ENCODE measurements at regions of chr14 and their contacts with region 1.

Region 1: DNA sequence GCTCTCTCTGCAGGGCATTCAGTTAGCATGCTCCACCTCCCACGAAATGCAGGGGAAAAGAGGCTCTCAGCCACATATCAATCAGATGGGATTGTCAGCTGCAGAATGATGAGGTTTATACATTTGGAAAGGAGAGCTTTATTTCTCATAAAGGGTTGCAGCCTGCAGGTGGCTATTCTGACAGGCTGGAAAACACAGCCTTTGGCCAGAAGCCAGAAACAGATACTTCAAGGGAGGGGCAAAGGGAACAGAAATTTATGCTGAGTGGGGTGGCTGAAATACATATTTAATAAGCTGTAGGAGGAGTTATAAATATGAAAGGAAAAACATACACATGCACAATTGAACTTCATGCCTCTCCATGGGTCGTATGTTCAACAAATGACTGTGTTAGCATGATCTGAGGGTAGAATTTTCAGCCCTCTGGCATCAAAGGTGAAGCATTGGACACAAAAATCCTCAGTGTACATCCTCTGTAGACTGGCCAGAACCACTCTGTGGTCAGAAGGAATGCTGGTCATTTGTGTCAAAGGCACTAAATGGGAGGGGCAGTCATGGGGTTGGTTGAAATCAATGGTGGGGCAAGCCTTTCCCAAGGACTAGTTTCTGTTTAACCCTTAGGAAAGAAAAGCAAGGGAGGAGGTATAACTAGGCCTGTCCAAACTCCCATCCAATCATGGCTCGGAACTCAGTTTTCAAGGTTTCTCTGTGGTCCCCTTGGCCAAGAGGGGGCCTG is 62.4 kb downstream of the TMX1 start:
- DNase-seq: peak; percentile 34 to 62
- H3K4me3 ChIP-seq: no peak overlapping the region
- H3K27ac ChIP-seq: peak overlapping the region; percentile 78
- H3K4me1 ChIP-seq: peaks cover 38% of the 10 kb centered on the region
- H3K27me3 ChIP-seq: no peaks in the 10 kb centered on the region
- CTCF ChIP-seq: no peak

Region 2: GRCh38 chr14:51490205-51490604 is 187.7 kb after region 1 on chr14:
- CTCF ChIA-PET with region 1: no interaction called
- POLR2A ChIA-PET with region 1: no interaction called
- intact Hi-C with region 1: no loop called
- DNase-seq: no peak
- H3K4me3 ChIP-seq: no peak overlapping the region
- H3K27ac ChIP-seq: no peak overlapping the region
- H3K4me1 ChIP-seq: no peaks in the 10 kb centered on the region
- H3K27me3 ChIP-seq: no peaks in the 10 kb centered on the region
- CTCF ChIP-seq: no peak

Region 3: GRCh38 chr14:51692646-51693045 is 390.2 kb after region 1 on chr14:
- CTCF ChIA-PET with region 1: no interaction called
- POLR2A ChIA-PET with region 1: interaction called, 10 read pairs
- intact Hi-C with region 1: no loop called
- DNase-seq: no peak
- H3K4me3 ChIP-seq: no peak overlapping the region
- H3K27ac ChIP-seq: no peak overlapping the region
- H3K4me1 ChIP-seq: no peaks in the 10 kb centered on the region
- H3K27me3 ChIP-seq: no peaks in the 10 kb centered on the region
- CTCF ChIP-seq: no peak